H1 (cell line): ENCODE measurements at regions of chr2 and their contacts with region 1.

Region 1: DNA sequence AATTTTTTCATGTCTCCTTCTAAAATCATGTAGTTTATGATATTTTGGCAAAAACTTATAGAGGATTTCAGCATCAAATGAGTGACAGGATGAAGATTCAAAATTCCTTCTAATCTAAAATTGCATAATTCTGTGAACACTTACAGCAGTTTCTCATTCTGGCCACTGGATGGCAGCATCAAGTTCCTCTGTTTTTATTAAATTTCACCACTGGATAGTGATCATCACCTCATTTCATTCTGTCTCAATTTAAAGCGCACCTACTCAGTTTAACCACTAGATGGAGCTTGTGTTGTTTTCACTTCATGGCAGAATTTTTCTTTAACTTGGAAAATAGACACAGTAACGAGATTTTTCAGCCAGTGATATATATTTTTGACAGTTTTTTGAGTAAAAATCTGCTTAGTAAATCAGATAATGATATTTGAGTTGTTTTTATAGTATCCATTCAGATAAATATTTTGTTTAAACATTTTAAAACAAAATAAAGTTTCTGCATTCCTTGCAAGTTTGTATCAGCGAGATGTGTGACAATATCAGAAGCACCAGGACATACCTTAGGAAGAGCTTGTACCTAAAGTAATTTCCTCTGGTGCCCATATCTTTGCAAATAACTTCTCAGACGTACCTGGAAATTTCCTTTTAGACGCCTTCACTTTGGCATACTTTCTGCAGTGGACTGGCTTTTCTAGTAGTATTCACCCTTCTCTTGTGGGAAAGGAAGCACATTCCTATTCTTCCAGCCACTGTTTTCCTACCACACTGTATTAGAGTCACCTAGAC is 94.7 kb upstream of the ARHGAP15 start:
- DNase-seq: no peak
- H3K4me3 ChIP-seq: no peak overlapping the region
- H3K27ac ChIP-seq: no peak overlapping the region
- H3K4me1 ChIP-seq: no peaks in the 10 kb centered on the region
- H3K27me3 ChIP-seq: no peaks in the 10 kb centered on the region
- CTCF ChIP-seq: peak in 2 of 3 experiments; percentile 85 to 92; a peak in 3 of 4 replicates
- EP300 ChIP-seq: no peak
- POLR2A ChIP-seq: no peak
- RAD21 ChIP-seq: peak; percentile 69 to 72

Region 2: GRCh38 chr2:143051465-143051864 is 17.0 kb after region 1 on chr2:
- CTCF ChIA-PET with region 1: interaction called, 24 read pairs
- POLR2A ChIA-PET with region 1: no interaction called
- DNase-seq: no peak
- H3K4me3 ChIP-seq: no peak overlapping the region
- H3K27ac ChIP-seq: no peak overlapping the region
- H3K4me1 ChIP-seq: no peaks in the 10 kb centered on the region
- H3K27me3 ChIP-seq: no peaks in the 10 kb centered on the region
- CTCF ChIP-seq: no peak
- EP300 ChIP-seq: no peak
- POLR2A ChIP-seq: no peak
- RAD21 ChIP-seq: no peak